Activated B cell treated with CpG ODN at 0.5 μM for 24 hours (primary cell): ENCODE measurements at regions of chr5 and their contacts with region 1.

Region 1: GRCh38 chr5:115169487-115170133 is at the start of gene TRIM36:
- DNase-seq: peak; percentile 98
- ATAC-seq: peak; percentile 92
- H3K4me3 Mint-ChIP-seq: peak within 1 kb of the TSS; percentile 92
- H3K27ac Mint-ChIP-seq: peak within 1 kb of the TSS; percentile 69
- H3K4me1 Mint-ChIP-seq: peaks cover 16% of the 10 kb centered on the region
- H3K27me3 Mint-ChIP-seq: peaks cover 39% of the 10 kb centered on the region
- CTCF ChIP-seq: no peak
- total RNA-seq, gene TRIM36: 7.5 and 8.9 TPM in 2 replicates

Region 2: GRCh38 chr5:115054387-115054951 is 115.1 kb before region 1 on chr5:
- CTCF ChIA-PET with region 1: no interaction called
- POLR2A ChIA-PET with region 1: no interaction called
- intact Hi-C with region 1: no loop called
- DNase-seq: no peak
- ATAC-seq: no peak
- H3K4me3 Mint-ChIP-seq: no peak overlapping the region
- H3K27ac Mint-ChIP-seq: no peak overlapping the region
- H3K4me1 Mint-ChIP-seq: no peaks in the 10 kb centered on the region
- H3K27me3 Mint-ChIP-seq: peaks cover 3% of the 10 kb centered on the region
- CTCF ChIP-seq: no peak

Region 3: GRCh38 chr5:115098041-115098702 is 71.4 kb before region 1 on chr5:
- CTCF ChIA-PET with region 1: interaction called, 3 read pairs
- POLR2A ChIA-PET with region 1: no interaction called
- intact Hi-C with region 1: loop called (anchors 2 kb)
- DNase-seq: no peak
- ATAC-seq: peak; percentile 75
- H3K4me3 Mint-ChIP-seq: no peak overlapping the region
- H3K27ac Mint-ChIP-seq: no peak overlapping the region
- H3K4me1 Mint-ChIP-seq: no peaks in the 10 kb centered on the region
- H3K27me3 Mint-ChIP-seq: peaks cover 3% of the 10 kb centered on the region
- CTCF ChIP-seq: no peak

Region 4: GRCh38 chr5:115209279-115209678 is 39.7 kb after region 1 on chr5:
- CTCF ChIA-PET with region 1: no interaction called
- POLR2A ChIA-PET with region 1: interaction called, 4 read pairs
- intact Hi-C with region 1: loop called (anchors 1 kb)
- DNase-seq: peak; percentile 21
- ATAC-seq: peak; percentile 98
- H3K4me3 Mint-ChIP-seq: peak overlapping the region; percentile 66
- H3K27ac Mint-ChIP-seq: peak overlapping the region; percentile 81
- H3K4me1 Mint-ChIP-seq: peaks cover 20% of the 10 kb centered on the region
- H3K27me3 Mint-ChIP-seq: no peaks in the 10 kb centered on the region
- CTCF ChIP-seq: no peak

Region 5: DNA sequence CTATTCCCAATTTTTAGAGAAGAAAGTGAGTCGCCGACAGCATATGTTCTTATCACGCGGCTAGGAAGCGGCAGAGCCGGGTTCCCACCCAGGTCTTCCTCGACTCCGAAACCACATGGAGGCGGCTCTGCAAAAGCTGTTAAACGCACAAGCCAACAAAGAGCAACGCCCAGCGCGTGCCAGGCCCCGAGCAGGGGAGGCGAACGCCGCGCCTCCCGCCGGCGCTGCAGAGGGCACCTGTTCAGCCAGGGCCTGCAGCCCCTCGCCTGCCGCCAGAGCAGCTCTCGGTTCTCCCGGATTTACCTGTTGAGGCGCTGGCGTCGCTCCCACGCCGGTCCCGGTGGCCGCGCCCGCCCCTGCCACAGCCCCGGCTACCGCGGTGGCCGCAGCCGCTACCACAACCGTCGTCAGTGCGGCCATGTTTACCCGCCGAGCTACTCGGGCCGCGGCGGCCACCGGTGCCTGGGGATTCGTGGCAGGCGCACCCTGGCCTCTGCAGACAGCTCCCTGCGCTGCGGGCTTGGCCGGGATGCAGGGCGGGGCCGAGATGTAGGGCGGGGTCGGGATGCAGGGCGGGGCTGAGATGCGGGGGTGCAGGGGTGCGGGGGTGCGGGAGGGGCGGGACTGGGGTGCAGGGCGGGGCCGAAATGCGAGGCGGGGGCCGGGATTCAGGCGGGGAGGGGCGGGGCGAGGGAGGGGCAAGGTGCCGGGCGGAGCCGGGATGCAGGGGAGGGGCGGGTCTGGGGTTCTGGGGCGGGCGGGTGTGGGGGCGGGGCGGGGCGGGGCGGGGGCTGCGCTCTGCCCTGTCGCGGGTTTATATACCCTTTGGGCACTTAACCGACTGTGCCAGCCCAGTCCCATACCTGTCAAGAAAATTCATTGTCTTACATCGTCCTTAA is 126.8 kb after region 1 on chr5 and contains the start of gene CCDC112:
- CTCF ChIA-PET with region 1: no interaction called
- POLR2A ChIA-PET with region 1: no interaction called
- intact Hi-C with region 1: loop called (anchors 1 kb)
- DNase-seq: peak; percentile 64
- ATAC-seq: peak; percentile 83
- H3K4me3 Mint-ChIP-seq: peak within 1 kb of the TSS; percentile 85
- H3K27ac Mint-ChIP-seq: peak within 1 kb of the TSS; percentile 47
- H3K4me1 Mint-ChIP-seq: peaks cover 13% of the 10 kb centered on the region
- H3K27me3 Mint-ChIP-seq: no peaks in the 10 kb centered on the region
- CTCF ChIP-seq: no peak
- total RNA-seq, gene CCDC112: 5.2 and 5.3 TPM in 2 replicates

Region 6: DNA sequence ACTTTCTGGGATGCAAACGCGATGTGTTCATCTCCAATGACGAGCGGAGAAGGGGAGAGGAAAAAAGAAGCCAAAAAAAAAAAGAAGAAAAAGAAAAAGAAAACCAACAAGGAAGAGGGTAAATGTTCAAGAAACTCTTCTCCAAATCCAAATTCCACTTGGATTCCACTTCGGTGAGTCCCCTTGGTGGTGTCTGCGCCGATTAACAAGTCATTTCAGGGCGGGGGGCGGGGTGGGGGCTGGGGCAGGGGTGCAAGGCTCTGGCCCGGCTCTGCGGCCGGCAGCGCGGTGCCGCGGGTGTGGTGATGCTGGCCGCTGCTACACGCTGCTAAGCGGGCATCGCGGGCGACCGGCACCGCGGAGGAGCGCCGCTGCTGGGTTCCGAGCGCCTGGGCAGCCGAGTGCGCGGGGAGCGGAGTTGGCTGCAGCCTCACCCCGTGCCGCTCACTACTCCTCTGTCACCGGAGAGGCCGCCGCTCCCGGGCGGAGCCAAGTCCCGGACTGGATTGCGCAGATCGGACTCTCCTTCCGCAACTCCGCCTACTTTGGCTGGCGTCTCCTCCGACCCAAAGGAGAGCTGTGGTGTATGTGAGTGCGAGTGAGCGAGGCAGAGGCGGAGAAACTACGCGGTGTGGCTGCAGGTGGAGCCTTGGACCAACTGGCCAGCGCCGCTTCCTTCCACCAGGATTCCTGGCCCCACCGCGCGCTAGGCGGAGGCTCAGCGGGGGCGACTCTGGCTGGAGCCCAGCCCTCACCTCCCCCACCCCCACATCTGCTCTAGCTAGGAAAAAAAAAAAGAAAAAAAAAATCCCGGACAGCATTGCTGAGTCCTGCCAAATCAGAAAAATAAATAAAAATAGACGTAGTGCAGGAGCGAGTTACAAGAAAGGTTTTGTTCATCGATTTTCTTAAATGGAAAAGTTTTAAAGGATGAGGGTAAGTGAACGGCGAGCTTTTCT is 1405.0 kb after region 1 on chr5 and contains the start of gene SEMA6A:
- CTCF ChIA-PET with region 1: no interaction called
- POLR2A ChIA-PET with region 1: no interaction called
- intact Hi-C with region 1: loop called (anchors 10 kb)
- DNase-seq: peak; percentile 46
- ATAC-seq: peak; percentile 69
- H3K4me3 Mint-ChIP-seq: peak within 1 kb of the TSS; percentile 83
- H3K27ac Mint-ChIP-seq: no peak within 1 kb of the TSS
- H3K4me1 Mint-ChIP-seq: peaks cover 42% of the 10 kb centered on the region
- H3K27me3 Mint-ChIP-seq: peaks cover 54% of the 10 kb centered on the region
- CTCF ChIP-seq: no peak
- total RNA-seq, gene SEMA6A: 0.20 TPM in 2 replicates